RWPE1 (cell line): ENCODE measurements at regions of chr15 and their contacts with region 1.

Region 1: DNA sequence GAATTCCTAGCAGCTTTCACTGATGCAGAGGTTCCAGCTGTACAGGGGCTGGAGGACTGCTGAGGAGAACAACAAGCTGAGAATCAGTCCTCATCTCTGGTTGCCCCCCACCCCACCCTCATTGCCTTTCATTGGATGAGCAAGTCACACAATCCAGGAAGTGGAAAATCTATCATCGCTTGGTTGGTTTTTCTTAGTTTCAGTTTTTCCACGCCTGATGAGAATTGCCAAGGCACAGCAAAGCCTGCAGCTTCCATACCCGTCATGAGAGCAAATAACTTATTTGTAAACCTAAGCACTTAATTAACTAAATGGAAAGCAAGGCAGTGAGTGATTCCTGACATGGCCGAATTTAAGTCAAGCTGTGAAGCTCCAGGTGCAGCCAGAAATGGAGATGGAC is 21.4 kb upstream of the LIPC start:
- DNase-seq: no peak
- H3K27ac ChIP-seq: no peak overlapping the region
- CTCF ChIP-seq: no peak

Region 2: GRCh38 chr15:58275785-58276184 is 134.6 kb before region 1 on chr15:
- CTCF ChIA-PET with region 1: interaction called, 10 read pairs
- POLR2A ChIA-PET with region 1: no interaction called
- DNase-seq: no peak
- H3K27ac ChIP-seq: no peak overlapping the region
- CTCF ChIP-seq: no peak

Region 3: GRCh38 chr15:58293622-58294550 is 116.5 kb before region 1 on chr15:
- CTCF ChIA-PET with region 1: no interaction called
- POLR2A ChIA-PET with region 1: no interaction called
- DNase-seq: no peak
- H3K27ac ChIP-seq: no peak overlapping the region
- CTCF ChIP-seq: no peak

Region 4: GRCh38 chr15:58608129-58608590 is 197.8 kb after region 1 on chr15:
- CTCF ChIA-PET with region 1: no interaction called
- POLR2A ChIA-PET with region 1: no interaction called
- DNase-seq: no peak
- H3K27ac ChIP-seq: no peak overlapping the region
- CTCF ChIP-seq: no peak